IMR-90 (cell line): ENCODE measurements at regions of chr9 and their contacts with region 1.

Region 1: DNA sequence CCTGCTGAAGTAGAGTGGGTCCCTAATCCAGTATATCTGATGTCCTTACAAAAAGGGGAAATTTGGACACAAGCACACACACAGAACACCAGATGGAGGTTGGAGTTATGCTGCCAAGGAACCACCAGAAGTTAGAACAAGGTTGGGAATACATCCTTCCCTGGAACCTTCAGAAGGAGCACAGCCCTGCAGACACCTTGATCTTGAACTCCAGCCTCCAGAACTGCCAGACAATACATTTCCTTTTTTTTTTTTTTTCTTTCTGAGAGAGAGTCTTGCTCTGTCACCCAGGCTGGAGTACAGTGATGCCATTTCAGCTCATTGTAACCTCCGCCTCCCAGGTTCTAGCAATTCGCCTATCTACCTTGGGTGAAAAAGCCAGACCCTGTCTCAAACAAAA is 7.1 kb upstream of the ODF2 start:
- DNase-seq: no peak
- ATAC-seq: no peak
- H3K4me3 ChIP-seq: no peak overlapping the region
- H3K27ac ChIP-seq: no peak overlapping the region
- H3K4me1 ChIP-seq: no peaks in the 10 kb centered on the region
- H3K27me3 ChIP-seq: peaks cover 5% of the 10 kb centered on the region
- CTCF ChIP-seq: no peak
- POLR2A ChIP-seq: no peak
- RAD21 ChIP-seq: no peak

Region 2: DNA sequence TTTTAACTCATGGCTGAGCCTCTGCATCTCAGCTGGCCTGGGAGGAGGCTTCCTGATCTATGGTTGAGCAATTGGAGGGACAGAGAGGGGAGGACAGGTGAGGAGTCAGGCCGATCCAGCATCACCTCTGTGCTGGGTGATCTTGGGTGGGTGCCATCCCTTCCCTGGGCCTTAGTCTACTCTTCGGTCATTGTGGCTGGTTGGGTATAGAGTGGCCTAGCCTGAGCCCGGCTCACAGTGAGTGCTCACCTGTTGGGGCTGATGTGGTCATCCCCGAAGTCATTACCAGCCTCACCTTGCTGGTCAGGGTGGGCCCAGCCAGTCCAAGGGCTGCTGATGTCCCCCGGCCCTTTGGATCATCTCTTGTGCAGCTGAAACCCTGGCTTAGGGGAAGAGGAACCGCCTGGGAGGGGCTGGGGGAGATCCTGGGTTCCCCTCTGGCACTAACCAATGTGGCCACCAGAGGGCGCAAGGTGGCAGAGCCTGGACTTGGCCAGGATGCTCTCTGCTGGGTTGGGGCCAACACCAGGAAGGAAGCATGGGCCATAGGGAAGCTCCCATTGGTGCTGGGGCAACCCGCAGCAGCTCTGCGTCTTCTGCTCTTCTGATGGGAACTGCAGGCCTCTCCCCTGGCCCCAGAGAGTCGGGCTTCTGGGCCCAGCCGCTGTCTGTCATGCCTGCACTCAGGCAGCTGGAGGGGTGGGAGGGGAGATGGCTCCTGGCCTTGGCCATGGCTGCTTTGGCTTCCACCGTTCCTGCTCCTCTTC is 10.2 kb before region 1 on chr9:
- CTCF ChIA-PET with region 1: interaction called, 10 read pairs
- POLR2A ChIA-PET with region 1: interaction called, 6 read pairs
- dilution Hi-C with region 1: no loop called
- in situ Hi-C with region 1: no loop called
- intact Hi-C with region 1: no loop called
- DNase-seq: peak; percentile 67
- ATAC-seq: peak; percentile 97
- H3K4me3 ChIP-seq: no peak overlapping the region
- H3K27ac ChIP-seq: no peak overlapping the region
- H3K4me1 ChIP-seq: no peaks in the 10 kb centered on the region
- H3K27me3 ChIP-seq: no peaks in the 10 kb centered on the region
- CTCF ChIP-seq: peak; percentile 79
- POLR2A ChIP-seq: no peak
- RAD21 ChIP-seq: peak; percentile 64